ENCODE measurements at regions of chr6 and their contacts with region 1.

Region 1: GRCh38 chr6:137171824-137172705 is 1.4 kb downstream of the IL22RA2 start:
- DNase-seq: no peak
- H3K4me3 ChIP-seq: no peak overlapping the region
- H3K4me3 Mint-ChIP-seq: no peak overlapping the region
- H3K27ac ChIP-seq: no peak overlapping the region
- H3K27ac Mint-ChIP-seq: no peak overlapping the region
- H3K4me1 ChIP-seq: peaks cover 12% of the 10 kb centered on the region
- H3K4me1 Mint-ChIP-seq: peaks cover 0 to 4% (median under 1%) of the 10 kb centered on the region in 4 donors
- H3K27me3 ChIP-seq: no peaks in the 10 kb centered on the region
- H3K27me3 Mint-ChIP-seq: peaks cover 0 to 2% of the 10 kb centered on the region in 2 donors

Region 2: GRCh38 chr6:136967876-136968752 is 204.0 kb before region 1 on chr6:
- CTCF ChIA-PET with region 1: no interaction called
- POLR2A ChIA-PET with region 1: no interaction called
- intact Hi-C with region 1: loop called (anchors 10 kb)
- DNase-seq: peak in 4 of 5 donors; percentile 38 to 51 (median 46)
- H3K4me3 ChIP-seq: no peak overlapping the region
- H3K4me3 Mint-ChIP-seq: peak overlapping the region in 1 of 8 donors; percentile 17
- H3K27ac ChIP-seq: no peak overlapping the region
- H3K27ac Mint-ChIP-seq: peak overlapping the region in 1 of 7 donors; percentile 68
- H3K4me1 ChIP-seq: no peaks in the 10 kb centered on the region
- H3K4me1 Mint-ChIP-seq: peaks cover 0 to 10% (median 6%) of the 10 kb centered on the region in 4 donors
- H3K27me3 ChIP-seq: no peaks in the 10 kb centered on the region
- H3K27me3 Mint-ChIP-seq: peaks cover 10 to 32% of the 10 kb centered on the region in 2 donors

Measured in CD4-positive, alpha-beta memory T cell (primary cell).